Thyroid gland (tissue), 4 donors: ENCODE measurements at regions of chr18 and their contacts with region 1.

Region 1: GRCh38 chr18:9737472-9738121 is 29.5 kb downstream of the RAB31 start:
- DNase-seq: no peak
- H3K4me3 ChIP-seq: no peak overlapping the region
- H3K27ac ChIP-seq: no peak overlapping the region
- H3K4me1 ChIP-seq: peaks cover 8 to 13% of the 10 kb centered on the region in 2 donors
- H3K27me3 ChIP-seq: no peaks in the 10 kb centered on the region
- CTCF ChIP-seq: no peak
- POLR2A ChIP-seq: no peak

Region 2: GRCh38 chr18:9614401-9615279 is 123.0 kb before region 1 on chr18 and contains the start of gene PPP4R1:
- intact Hi-C with region 1: loop called (anchors 10 kb)
- DNase-seq: peak; percentile 84 to 87
- H3K4me3 ChIP-seq: peak within 1 kb of the TSS; percentile 62 to 93 (median 83)
- H3K27ac ChIP-seq: peak within 1 kb of the TSS; percentile 85 to 97 (median 94)
- H3K4me1 ChIP-seq: peaks cover 16 to 21% of the 10 kb centered on the region in 2 donors
- H3K27me3 ChIP-seq: no peaks in the 10 kb centered on the region
- CTCF ChIP-seq: no peak
- POLR2A ChIP-seq: peak in 1 of 2 donors; percentile 59
- total RNA-seq, gene PPP4R1: 95.5 to 170 (median 110) TPM